Mammary epithelial cell (primary cell): ENCODE measurements at regions of chr6 and their contacts with region 1.

Region 1: DNA sequence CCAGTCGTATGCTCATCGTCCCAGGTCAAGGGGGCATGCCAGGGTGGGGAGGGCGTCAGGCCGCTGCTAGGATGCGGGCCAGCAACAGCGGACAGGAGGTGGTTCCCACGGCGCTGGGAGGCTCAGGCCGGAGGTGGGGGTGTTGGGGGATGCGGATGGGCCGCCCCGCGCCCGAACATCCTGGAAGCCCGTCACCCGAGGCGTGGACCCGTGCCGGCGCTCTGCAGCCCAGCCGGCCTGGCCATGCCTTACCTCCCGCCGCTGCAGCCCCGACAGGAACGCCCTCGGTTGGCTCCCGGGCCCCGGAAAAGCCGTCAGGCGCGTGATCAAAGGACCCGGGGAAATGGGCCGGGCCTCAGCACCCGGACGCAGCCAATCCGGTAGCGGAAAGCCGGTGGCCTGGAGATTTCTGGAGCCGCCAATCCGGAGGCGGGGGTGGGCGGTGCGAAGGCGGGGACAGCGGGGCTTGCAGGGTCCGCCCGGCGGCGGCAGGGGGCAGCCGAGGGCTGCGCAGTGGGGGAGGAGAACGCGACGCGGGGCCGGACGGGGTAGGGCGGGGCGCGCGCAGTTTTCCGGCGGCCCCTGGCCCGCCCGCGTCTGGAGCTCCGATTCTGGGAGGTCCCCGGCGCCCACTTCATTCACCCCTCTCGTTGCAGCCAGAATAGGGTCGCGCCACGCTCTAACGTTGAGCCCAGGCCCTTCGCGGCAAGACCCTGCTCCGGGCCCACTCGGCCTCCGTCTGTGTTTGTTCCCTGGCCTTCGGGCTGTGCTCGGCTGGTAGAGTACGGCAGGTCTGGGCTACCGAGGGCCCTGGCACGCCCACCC is at the start of gene SMIM29:
- DNase-seq: peak; percentile 94
- H3K4me3 ChIP-seq: peak within 1 kb of the TSS; percentile 83 to 95 (median 84)
- H3K27ac ChIP-seq: peak within 1 kb of the TSS; percentile 48
- H3K4me1 ChIP-seq: peaks cover 47% of the 10 kb centered on the region
- H3K27me3 ChIP-seq: no peaks in the 10 kb centered on the region
- CTCF ChIP-seq: peak; percentile 38 to 87
- total RNA-seq, gene SMIM29: 20.3 to 40.6 TPM

Region 2: GRCh38 chr6:34161857-34162515 is 87.0 kb before region 1 on chr6:
- CTCF ChIA-PET with region 1: no interaction called
- dilution Hi-C with region 1: no loop called
- in situ Hi-C with region 1: no loop called
- intact Hi-C with region 1: loop called (anchors 5 kb)
- DNase-seq: no peak
- H3K4me3 ChIP-seq: no peak overlapping the region
- H3K27ac ChIP-seq: no peak overlapping the region
- H3K4me1 ChIP-seq: no peaks in the 10 kb centered on the region
- H3K27me3 ChIP-seq: no peaks in the 10 kb centered on the region
- CTCF ChIP-seq: no peak

Region 3: DNA sequence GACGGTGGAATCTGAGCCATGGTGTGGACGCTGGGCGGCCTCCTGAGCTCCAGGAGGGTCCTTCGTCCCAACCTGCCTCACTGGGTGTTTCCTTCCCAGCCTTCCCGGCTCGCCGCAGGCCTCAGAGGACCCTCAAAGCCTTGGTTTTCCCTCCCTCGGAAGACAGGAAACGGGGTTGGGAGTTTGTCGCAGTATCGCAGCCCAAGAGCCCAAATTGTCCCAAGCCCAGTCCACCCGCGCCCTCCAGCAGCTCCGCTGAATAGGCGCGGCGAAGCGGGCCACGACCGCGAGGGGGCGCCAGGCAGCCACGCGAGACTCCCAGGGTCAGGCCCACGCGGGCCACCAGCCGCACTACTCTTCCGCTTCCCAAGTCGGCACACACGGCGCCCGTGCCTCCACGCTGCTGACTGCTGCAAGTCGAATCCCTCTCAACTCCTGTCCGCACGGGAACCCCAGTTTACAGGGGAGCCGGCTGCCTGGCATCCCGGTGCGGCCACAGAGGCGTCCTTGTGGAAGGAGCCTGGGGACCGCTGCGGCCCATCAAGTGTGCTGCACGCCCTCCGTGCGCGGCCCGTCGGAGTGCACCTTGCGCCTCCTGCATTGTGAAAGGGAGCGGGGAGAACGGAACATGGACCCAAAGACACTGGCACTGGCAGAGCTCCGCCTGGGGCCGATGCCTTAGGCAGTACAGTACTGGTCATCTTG is 52.7 kb before region 1 on chr6:
- CTCF ChIA-PET with region 1: interaction called, 5 read pairs
- dilution Hi-C with region 1: no loop called
- in situ Hi-C with region 1: no loop called
- intact Hi-C with region 1: loop called (anchors 1 kb)
- DNase-seq: peak; percentile 45
- H3K4me3 ChIP-seq: peak overlapping the region; percentile 18 to 47 (median 40)
- H3K27ac ChIP-seq: no peak overlapping the region
- H3K4me1 ChIP-seq: peaks cover 11% of the 10 kb centered on the region
- H3K27me3 ChIP-seq: no peaks in the 10 kb centered on the region
- CTCF ChIP-seq: peak; percentile 71 to 98

Region 4: DNA sequence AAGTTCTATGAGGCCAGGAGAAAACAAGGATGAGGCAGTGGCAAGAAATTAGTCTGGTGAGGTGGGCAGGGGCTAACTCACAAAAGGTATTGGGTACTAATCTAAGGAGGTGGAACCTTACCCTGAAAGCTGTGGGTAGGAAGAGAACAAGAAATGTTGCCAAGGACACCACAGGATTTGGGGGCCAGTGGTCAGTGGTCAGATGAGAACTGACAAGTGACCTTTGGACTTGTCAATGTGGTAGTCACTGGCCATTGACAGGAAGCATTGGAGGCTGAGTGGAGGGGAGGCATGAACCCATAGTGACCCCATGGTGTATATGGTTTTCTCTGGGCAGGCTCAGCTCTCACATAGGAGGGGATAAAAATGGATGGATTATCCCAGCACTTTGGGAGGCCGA is 25.2 kb after region 1 on chr6:
- CTCF ChIA-PET with region 1: no interaction called
- dilution Hi-C with region 1: no loop called
- in situ Hi-C with region 1: no loop called
- intact Hi-C with region 1: no loop called
- DNase-seq: no peak
- H3K4me3 ChIP-seq: no peak overlapping the region
- H3K27ac ChIP-seq: no peak overlapping the region
- H3K4me1 ChIP-seq: no peaks in the 10 kb centered on the region
- H3K27me3 ChIP-seq: no peaks in the 10 kb centered on the region
- CTCF ChIP-seq: no peak

Region 5: DNA sequence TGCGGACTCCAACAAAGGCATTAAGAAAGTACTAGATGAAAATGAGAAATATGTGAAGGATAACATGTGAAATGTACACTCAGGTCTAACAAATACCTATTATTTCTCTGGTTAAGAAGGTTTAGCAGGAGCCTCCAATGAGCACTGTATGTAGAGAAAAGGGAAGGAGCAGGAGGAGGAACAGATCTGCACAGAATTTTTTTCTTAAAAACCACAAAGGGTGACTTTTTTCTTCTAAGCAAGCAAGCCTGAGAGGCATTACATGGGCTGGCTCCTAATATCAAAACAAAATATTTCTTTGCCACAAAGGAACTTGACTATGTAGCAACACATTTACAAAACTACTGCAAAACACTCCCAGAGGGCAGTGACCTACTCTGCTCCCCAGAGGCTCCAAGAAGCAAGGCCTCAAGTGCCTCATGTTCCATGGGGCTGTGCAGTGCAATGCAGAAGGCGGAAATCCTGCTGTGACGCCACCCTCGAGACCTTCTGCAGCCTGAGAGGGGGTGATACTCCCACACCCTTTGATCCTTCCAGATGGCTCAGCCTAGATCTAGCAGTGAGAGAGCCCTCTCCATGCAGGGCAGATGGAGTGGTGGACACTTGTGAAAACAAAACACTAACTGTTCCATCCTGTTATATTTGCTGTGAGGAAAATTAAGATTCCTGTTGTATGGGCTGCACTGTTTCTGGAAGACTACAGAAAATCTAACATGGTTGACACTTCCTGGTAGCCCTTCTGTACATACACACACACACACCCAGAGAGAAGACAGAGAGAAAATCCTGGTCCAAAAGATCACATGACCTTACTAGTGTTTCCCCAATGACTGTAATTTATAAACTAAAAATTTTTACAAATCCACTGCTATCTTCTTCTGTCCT is 35.9 kb after region 1 on chr6:
- CTCF ChIA-PET with region 1: no interaction called
- dilution Hi-C with region 1: no loop called
- in situ Hi-C with region 1: no loop called
- intact Hi-C with region 1: loop called (anchors 2 kb)
- DNase-seq: no peak
- H3K4me3 ChIP-seq: no peak overlapping the region
- H3K27ac ChIP-seq: no peak overlapping the region
- H3K4me1 ChIP-seq: no peaks in the 10 kb centered on the region
- H3K27me3 ChIP-seq: no peaks in the 10 kb centered on the region
- CTCF ChIP-seq: no peak

Region 6: DNA sequence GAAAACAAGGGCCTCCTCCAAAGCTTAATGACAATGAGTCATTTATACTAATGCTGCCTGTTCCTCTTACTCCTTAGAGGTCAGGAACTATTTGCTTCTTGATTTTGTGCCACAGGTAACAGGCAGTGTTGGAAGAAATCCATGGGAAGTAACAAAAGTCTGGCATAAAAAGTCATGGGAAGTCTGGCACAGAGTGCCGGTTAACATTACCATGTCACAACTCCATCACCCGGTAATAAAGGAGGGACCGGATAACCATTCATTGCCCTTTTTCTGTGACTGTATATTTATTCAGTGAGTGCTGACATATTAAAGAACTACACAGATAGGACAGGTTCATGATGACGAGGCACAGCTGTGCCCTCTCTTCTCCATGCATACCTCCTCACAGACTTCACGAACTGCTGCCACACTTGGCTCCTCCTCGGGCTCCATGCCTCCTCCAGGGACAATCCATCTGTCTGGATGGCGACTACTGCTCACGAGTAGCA is 92.6 kb after region 1 on chr6:
- CTCF ChIA-PET with region 1: no interaction called
- dilution Hi-C with region 1: loop called (anchors 5 kb)
- in situ Hi-C with region 1: no loop called
- intact Hi-C with region 1: no loop called
- DNase-seq: peak; percentile 54
- H3K4me3 ChIP-seq: no peak overlapping the region
- H3K27ac ChIP-seq: no peak overlapping the region
- H3K4me1 ChIP-seq: peaks cover 15% of the 10 kb centered on the region
- H3K27me3 ChIP-seq: no peaks in the 10 kb centered on the region
- CTCF ChIP-seq: no peak